SK-N-SH (cell line): ENCODE measurements at regions of chr10 and their contacts with region 1.

Region 1: GRCh38 chr10:125343118-125343925 is 183.0 kb upstream of the CTBP2 start:
- DNase-seq: peak; percentile 48
- H3K4me3 ChIP-seq: no peak overlapping the region
- H3K27ac ChIP-seq: peak overlapping the region in 1 of 2 experiments; percentile 67; a peak in 1 of 4 replicates
- H3K4me1 ChIP-seq: peaks cover 0 to 4% of the 10 kb centered on the region in 2 experiments; a peak in 2 of 4 replicates
- H3K27me3 ChIP-seq: no peaks in the 10 kb centered on the region
- CTCF ChIP-seq: peak; percentile 62
- EP300 ChIP-seq: no peak
- RAD21 ChIP-seq: peak; percentile 61

Region 2: GRCh38 chr10:125333209-125333591 is 10.1 kb before region 1 on chr10:
- CTCF ChIA-PET with region 1: interaction called, 29 read pairs
- POLR2A ChIA-PET with region 1: no interaction called
- DNase-seq: no peak
- H3K4me3 ChIP-seq: no peak overlapping the region
- H3K27ac ChIP-seq: no peak overlapping the region
- H3K4me1 ChIP-seq: no peaks in the 10 kb centered on the region
- H3K27me3 ChIP-seq: no peaks in the 10 kb centered on the region
- CTCF ChIP-seq: no peak
- EP300 ChIP-seq: no peak
- RAD21 ChIP-seq: no peak

Region 3: GRCh38 chr10:125355657-125356056 is 12.3 kb after region 1 on chr10:
- CTCF ChIA-PET with region 1: interaction called, 10 read pairs
- POLR2A ChIA-PET with region 1: no interaction called
- DNase-seq: no peak
- H3K4me3 ChIP-seq: no peak overlapping the region
- H3K27ac ChIP-seq: no peak overlapping the region
- H3K4me1 ChIP-seq: no peaks in the 10 kb centered on the region
- H3K27me3 ChIP-seq: no peaks in the 10 kb centered on the region
- CTCF ChIP-seq: no peak
- EP300 ChIP-seq: no peak
- RAD21 ChIP-seq: no peak